ENCODE measurements at regions of chrX and their contacts with region 1.

Region 1: GRCh38 chrX:119791438-119792231 is at the start of gene RPL39:
- DNase-seq: peak; percentile 60 to 90 (median 80)
- ATAC-seq: peak; percentile 93
- H3K4me3 Mint-ChIP-seq: peak within 1 kb of the TSS; percentile 92 to 97 (median 95)
- H3K27ac Mint-ChIP-seq: peak within 1 kb of the TSS; percentile 94 to 98 (median 97)
- H3K4me1 Mint-ChIP-seq: peaks cover 0 to 46% (median 28%) of the 10 kb centered on the region in 4 donors
- H3K27me3 Mint-ChIP-seq: no peaks in the 10 kb centered on the region
- polyA plus RNA-seq, gene RPL39: 4,465 to 5,898 (median 5,767) TPM

Region 2: GRCh38 chrX:119606280-119607015 is 185.2 kb before region 1 on chrX and contains the start of gene NKRF:
- POLR2A ChIA-PET with region 1: interaction called, 13 read pairs
- DNase-seq: peak; percentile 83 to 96 (median 90)
- ATAC-seq: peak; percentile 79 to 82
- H3K4me3 Mint-ChIP-seq: peak within 1 kb of the TSS; percentile 87 to 98 (median 94)
- H3K27ac Mint-ChIP-seq: peak within 1 kb of the TSS; percentile 94 to 99 (median 98)
- H3K4me1 Mint-ChIP-seq: peaks cover 12 to 48% (median 34%) of the 10 kb centered on the region in 4 donors
- H3K27me3 Mint-ChIP-seq: no peaks in the 10 kb centered on the region
- polyA plus RNA-seq, gene NKRF: 4.8 to 8.5 (median 6.8) TPM

Region 3: GRCh38 chrX:119757979-119758730 is 33.5 kb before region 1 on chrX and contains the start of gene SOWAHD:
- POLR2A ChIA-PET with region 1: interaction called, 43 read pairs
- DNase-seq: peak in 7 of 10 donors; percentile 22 to 47 (median 32)
- ATAC-seq: peak; percentile 28 to 45
- H3K4me3 Mint-ChIP-seq: peak within 1 kb of the TSS; percentile 62 to 90 (median 80)
- H3K27ac Mint-ChIP-seq: peak within 1 kb of the TSS; percentile 95 to 98 (median 96)
- H3K4me1 Mint-ChIP-seq: peaks cover 20 to 58% (median 52%) of the 10 kb centered on the region in 4 donors
- H3K27me3 Mint-ChIP-seq: no peaks in the 10 kb centered on the region
- polyA plus RNA-seq, gene SOWAHD: 0.43 to 1.1 (median 0.47) TPM

Region 4: GRCh38 chrX:119852382-119853353 is 61.0 kb after region 1 on chrX and contains the start of gene UPF3B:
- POLR2A ChIA-PET with region 1: interaction called, 15 read pairs
- DNase-seq: peak; percentile 81 to 98 (median 93)
- ATAC-seq: peak; percentile 95 to 97
- H3K4me3 Mint-ChIP-seq: peak within 1 kb of the TSS; percentile 97 to 100 (median 99)
- H3K27ac Mint-ChIP-seq: peak within 1 kb of the TSS; percentile 95 to 100 (median 99)
- H3K4me1 Mint-ChIP-seq: peaks cover 6 to 18% (median 13%) of the 10 kb centered on the region in 4 donors
- H3K27me3 Mint-ChIP-seq: no peaks in the 10 kb centered on the region
- polyA plus RNA-seq, gene UPF3B: 8.6 to 11.0 (median 9.2) TPM

Region 5: GRCh38 chrX:119871599-119872395 is 80.2 kb after region 1 on chrX and contains the starts of genes NDUFA1 and RNF113A:
- POLR2A ChIA-PET with region 1: interaction called, 25 read pairs
- DNase-seq: peak; percentile 70 to 93 (median 84)
- ATAC-seq: peak; percentile 89 to 90
- H3K4me3 Mint-ChIP-seq: peak within 1 kb of the TSS; percentile 94 to 100 (median 98)
- H3K27ac Mint-ChIP-seq: peak within 1 kb of the TSS; percentile 95 to 100 (median 99)
- H3K4me1 Mint-ChIP-seq: peaks cover 5 to 39% (median 22%) of the 10 kb centered on the region in 4 donors
- H3K27me3 Mint-ChIP-seq: no peaks in the 10 kb centered on the region
- polyA plus RNA-seq, gene NDUFA1: 277 to 382 (median 308) TPM
- polyA plus RNA-seq, gene RNF113A: 48.8 to 69.5 (median 51.3) TPM

Region 6: DNA sequence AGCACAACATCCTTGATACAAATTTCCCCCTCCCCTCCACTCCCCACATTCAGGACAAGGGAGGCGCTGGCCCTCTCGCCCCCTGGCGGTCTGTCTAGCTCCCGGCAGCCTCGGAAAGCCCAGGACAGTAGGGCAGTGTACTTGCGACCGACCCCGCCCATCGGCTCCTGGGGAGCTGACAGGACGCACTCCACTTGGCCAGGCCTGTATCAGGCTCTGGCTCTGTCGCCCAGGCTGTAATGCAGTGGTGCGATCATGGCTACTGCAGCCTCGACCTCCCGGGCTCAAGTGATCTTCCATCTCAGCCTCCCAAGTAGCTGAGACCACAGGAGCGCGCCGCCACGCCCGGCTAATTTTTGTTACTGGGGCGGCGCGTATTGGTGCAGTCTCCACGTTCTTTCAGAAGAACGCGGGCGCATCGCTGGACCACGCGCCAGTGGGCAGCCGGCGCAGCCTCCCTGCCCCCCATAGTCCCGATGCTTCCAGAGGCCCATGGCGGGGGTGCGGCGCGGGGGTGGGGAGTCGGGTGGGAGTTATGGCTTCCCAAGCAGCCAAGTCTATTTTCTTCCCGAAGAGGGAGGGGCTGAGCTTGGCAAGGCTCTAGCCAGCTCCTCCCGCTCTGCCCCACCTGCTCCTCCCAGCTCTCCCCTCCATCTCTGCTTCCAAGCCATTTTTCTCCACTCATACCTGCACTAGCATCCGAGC is 96.2 kb after region 1 on chrX:
- POLR2A ChIA-PET with region 1: interaction called, 10 read pairs
- DNase-seq: peak; percentile 27 to 72 (median 42)
- ATAC-seq: peak; percentile 86 to 95
- H3K4me3 Mint-ChIP-seq: peak overlapping the region; percentile 18 to 65 (median 46)
- H3K27ac Mint-ChIP-seq: no peak overlapping the region
- H3K4me1 Mint-ChIP-seq: peaks cover 0 to 14% (median 7%) of the 10 kb centered on the region in 4 donors
- H3K27me3 Mint-ChIP-seq: peaks cover 0 to 2% (median 0%) of the 10 kb centered on the region in 5 donors

Measured in naive thymus-derived CD8-positive, alpha-beta T cell (primary cell).